PC-9 (cell line): ENCODE measurements at regions of chr15 and their contacts with region 1.

Region 1: GRCh38 chr15:73794443-73795133 is 41.4 kb upstream of the INSYN1 start:
- DNase-seq: no peak
- H3K4me3 ChIP-seq: no peak overlapping the region
- H3K27ac ChIP-seq: no peak overlapping the region
- H3K4me1 ChIP-seq: no peaks in the 10 kb centered on the region
- H3K27me3 ChIP-seq: peaks cover 26% of the 10 kb centered on the region; the same call in 1 of the 2 replicates
- CTCF ChIP-seq: no peak

Region 2: DNA sequence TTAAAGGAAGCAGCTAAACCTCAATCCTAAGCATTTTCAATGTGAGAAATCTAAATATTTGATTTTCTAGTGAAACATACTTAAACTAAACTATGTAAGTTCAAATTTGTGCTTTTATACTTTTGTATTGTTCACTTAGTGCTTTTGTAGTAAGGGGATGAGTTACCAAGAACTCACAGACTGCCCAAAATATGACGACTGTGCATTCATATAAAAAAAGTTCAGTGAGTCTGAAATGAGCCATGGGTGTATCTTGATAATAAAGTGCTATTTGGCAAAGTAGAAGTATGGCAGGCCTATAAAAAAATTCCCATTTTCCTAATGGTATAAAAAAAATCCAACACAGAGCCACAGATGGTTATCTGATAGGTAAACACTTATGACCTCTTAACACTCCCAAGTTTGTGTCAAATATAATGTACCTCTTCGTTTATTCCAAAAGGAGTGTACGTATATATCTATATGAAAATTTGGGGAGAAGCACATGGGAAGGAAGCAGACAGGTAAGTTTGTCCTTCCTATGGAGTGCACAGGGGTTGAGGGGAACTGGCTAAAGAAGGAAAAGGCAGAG is 227.5 kb before region 1 on chr15:
- CTCF ChIA-PET with region 1: interaction called, 10 read pairs
- POLR2A ChIA-PET with region 1: no interaction called
- intact Hi-C with region 1: no loop called
- DNase-seq: no peak
- H3K4me3 ChIP-seq: no peak overlapping the region
- H3K27ac ChIP-seq: no peak overlapping the region
- H3K4me1 ChIP-seq: peaks cover 14% of the 10 kb centered on the region
- H3K27me3 ChIP-seq: no peaks in the 10 kb centered on the region
- CTCF ChIP-seq: no peak

Region 3: GRCh38 chr15:73763931-73764330 is 30.7 kb before region 1 on chr15:
- CTCF ChIA-PET with region 1: interaction called, 16 read pairs
- POLR2A ChIA-PET with region 1: no interaction called
- intact Hi-C with region 1: no loop called
- DNase-seq: no peak
- H3K4me3 ChIP-seq: no peak overlapping the region
- H3K27ac ChIP-seq: no peak overlapping the region
- H3K4me1 ChIP-seq: no peaks in the 10 kb centered on the region
- H3K27me3 ChIP-seq: peaks cover 79% of the 10 kb centered on the region
- CTCF ChIP-seq: no peak

Region 4: GRCh38 chr15:73991726-73992593 is 197.4 kb after region 1 on chr15 and contains the start of gene STOML1:
- CTCF ChIA-PET with region 1: no interaction called
- POLR2A ChIA-PET with region 1: no interaction called
- intact Hi-C with region 1: no loop called
- DNase-seq: peak; percentile 82 to 94
- H3K4me3 ChIP-seq: peak within 1 kb of the TSS; percentile 55
- H3K27ac ChIP-seq: no peak within 1 kb of the TSS
- H3K4me1 ChIP-seq: peaks cover 65% of the 10 kb centered on the region
- H3K27me3 ChIP-seq: no peaks in the 10 kb centered on the region
- CTCF ChIP-seq: peak; percentile 82
- total RNA-seq, gene STOML1: 6.0 and 6.1 TPM in 2 replicates